ENCODE measurements at regions of chr4 and their contacts with region 1.

Region 1: GRCh38 chr4:54961357-54961975 is 163.9 kb downstream of the KDR start:
- DNase-seq: no peak
- H3K4me3 ChIP-seq: no peak overlapping the region
- CTCF ChIP-seq: peak; percentile 52

Region 2: GRCh38 chr4:54384563-54384962 is 576.9 kb before region 1 on chr4:
- CTCF ChIA-PET with region 1: interaction called, 18 read pairs
- POLR2A ChIA-PET with region 1: no interaction called
- DNase-seq: no peak
- H3K4me3 ChIP-seq: no peak overlapping the region
- CTCF ChIP-seq: peak; percentile 62

Region 3: DNA sequence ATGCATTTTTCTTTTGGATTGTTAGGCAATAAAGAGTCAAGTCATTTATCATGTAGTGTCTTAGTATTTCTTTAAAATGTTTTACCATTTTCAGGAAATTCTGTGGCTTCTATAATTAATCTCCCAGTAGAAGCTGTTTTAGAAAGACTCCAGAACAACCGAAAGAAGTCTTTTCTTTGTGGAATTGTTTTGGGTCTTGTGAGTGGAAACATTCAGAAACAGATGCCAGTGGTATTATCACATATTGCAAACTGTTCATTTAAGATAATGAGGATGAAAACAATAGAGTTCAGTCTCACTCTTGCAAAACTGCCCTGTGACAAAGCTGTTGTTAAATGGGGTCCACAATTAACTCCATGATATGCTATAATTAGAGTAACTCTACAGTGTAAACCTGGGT is 514.9 kb before region 1 on chr4:
- CTCF ChIA-PET with region 1: interaction called, 12 read pairs
- POLR2A ChIA-PET with region 1: no interaction called
- DNase-seq: no peak
- H3K4me3 ChIP-seq: no peak overlapping the region
- CTCF ChIP-seq: no peak

Region 4: DNA sequence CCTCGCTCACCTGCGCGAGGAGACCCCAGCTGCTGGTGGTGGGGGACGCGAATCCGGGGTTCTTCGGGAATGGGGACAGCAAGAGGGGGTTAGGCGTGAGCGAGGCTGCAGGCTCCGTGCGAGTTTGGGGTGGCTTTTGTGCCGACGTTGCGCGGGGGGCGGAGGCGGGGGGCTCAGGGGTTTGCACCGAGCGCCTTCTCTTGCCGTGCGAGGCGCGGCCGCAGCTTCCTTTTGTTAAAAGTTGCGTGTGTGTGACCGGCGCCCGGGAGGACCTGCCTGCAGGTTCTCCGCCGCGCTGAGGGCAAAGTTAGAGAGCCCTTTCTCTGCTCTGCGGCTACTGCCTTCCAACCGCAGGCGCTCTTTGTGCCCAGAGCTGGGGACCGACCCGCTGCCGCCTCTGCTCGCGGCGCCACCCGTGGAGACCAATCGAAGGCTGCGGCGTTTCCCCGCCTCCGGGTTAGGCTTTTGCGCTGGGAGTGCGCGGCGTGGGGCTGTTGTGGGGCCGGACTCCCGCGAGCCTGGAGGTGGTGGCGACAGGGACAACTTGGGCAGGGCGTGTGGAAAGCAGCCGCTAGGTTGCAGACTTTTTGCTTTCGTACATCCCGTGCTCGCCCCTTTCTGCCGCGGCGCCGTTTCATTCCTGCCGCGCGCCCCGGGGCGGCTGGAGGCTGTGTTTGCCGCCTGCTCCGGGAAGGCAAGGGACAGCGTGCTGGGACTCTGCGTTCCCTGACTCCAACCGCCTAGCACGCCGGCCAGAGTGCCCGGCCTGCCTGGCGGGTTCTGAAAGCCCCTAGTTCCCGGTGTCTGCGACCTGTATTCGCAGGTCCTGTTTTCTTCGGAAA is 303.0 kb before region 1 on chr4:
- CTCF ChIA-PET with region 1: interaction called, 44 read pairs
- POLR2A ChIA-PET with region 1: interaction called, 6 read pairs
- DNase-seq: no peak
- H3K4me3 ChIP-seq: peak overlapping the region; percentile 75
- CTCF ChIP-seq: peak; percentile 47

Region 5: DNA sequence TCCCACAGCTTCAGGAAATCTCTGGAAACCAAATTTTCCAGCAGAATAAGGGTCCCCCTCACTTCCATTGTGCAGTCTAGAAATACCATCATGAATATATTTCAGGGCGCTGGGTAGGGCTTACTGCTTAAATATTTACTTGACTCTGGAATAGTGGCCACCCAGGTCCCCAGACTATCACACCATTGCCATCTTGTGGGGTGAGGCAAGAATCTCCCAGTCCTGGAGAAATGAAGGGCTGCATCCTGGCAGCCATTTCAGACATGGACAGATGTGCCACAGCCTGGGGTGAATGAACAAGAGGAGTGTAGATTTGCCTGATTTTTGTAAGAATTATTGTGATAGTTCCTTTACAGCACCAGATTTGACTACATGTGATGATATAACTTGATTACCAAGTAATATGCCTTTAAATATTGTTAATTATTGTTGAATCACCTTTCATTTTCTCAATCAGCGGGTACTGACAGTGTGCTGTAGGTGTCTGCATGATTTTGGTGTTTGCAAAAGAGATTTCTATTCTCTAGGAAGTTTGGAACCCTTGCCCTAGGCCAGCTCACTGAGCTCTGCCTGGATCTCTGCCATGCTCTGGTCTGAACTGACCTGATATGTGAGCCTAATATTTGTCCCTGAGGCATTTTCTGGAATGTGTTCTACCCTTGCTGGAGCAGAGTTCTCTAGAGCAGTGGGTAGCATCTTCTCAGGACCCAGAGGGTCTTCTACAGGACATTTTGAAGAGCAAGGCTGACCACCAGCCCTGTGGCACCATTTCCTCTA is 120.3 kb before region 1 on chr4:
- CTCF ChIA-PET with region 1: interaction called, 12 read pairs
- POLR2A ChIA-PET with region 1: no interaction called
- DNase-seq: no peak
- H3K4me3 ChIP-seq: no peak overlapping the region
- CTCF ChIP-seq: peak; percentile 45

Region 6: GRCh38 chr4:54971474-54971950 is 10.0 kb after region 1 on chr4:
- CTCF ChIA-PET with region 1: interaction called, 89 read pairs
- POLR2A ChIA-PET with region 1: no interaction called
- DNase-seq: no peak
- H3K4me3 ChIP-seq: no peak overlapping the region
- CTCF ChIP-seq: peak; percentile 60

Region 7: DNA sequence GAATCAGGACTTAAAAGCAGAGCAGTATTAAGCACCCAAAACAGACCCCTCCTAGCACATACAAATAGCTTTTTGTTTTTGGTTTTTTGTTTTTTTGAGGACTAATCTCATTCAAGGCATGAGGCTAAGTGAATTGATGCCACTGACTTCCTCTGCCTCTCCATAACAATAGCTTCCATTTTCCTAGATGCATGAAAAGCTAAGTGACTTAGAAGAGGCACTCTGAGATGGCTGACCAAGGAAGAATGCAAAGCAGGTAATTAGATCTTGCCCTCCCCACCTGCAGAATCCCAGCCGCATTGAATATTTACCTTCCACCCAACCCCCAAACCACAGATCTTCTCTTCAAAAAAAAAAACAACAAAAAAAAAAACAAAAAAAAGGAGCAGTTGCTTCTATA is 171.3 kb after region 1 on chr4:
- CTCF ChIA-PET with region 1: no interaction called
- POLR2A ChIA-PET with region 1: no interaction called
- DNase-seq: no peak
- H3K4me3 ChIP-seq: no peak overlapping the region
- CTCF ChIP-seq: no peak